T-cell (primary cell): ENCODE measurements at regions of chr11 and their contacts with region 1.

Region 1: DNA sequence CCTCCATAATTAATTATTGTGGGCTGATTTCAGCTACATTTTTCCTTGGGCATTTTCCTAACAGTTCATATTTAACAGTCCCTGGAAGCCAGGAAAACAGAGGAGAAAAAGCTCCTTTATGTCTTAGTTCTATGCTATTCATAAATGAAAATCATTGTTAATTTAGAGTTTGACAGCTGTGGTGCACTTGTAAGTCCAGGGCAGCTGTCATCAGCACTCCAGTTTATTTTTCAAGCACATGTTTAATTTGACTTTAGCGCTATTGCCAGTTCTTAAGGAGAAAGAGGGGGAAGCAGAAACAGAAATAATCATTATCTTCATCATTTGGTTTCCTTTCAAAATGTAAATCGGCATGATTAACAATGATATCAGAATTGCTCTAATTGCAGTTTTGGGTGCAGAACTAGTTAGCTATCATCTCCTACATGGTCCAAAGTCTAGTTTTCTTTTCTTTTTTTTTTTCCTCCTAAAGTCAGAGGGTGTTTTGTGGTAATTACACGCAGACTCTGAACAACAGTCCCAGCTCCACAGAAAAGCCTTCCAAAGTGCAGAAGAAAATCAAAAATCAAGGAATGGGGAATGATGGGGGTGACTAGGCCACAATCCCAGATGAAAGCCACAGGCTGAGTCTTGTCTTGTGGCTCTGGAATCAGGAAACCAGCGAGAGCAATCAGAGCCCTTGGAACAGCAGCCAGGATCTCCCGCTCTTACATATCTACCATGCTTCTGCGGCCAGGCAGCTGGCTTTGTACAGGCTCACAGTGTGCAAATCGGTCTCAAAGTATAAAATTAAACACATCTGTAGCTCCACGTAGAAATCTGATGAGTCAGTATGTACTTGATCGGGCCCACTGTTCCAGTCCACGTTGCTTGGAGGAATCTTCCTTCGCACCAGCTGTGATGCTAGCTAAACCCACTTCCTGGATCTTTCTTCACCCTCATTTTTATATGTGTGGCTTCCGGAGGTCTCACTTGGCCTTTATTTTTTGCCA is 91.9 kb downstream of the SPON1 start:
- DNase-seq: peak in 1 of 35 experiments; percentile 10
- ATAC-seq: peak in 3 of 4 experiments; percentile 34 to 76 (median 51)
- H3K4me3 ChIP-seq: no peak overlapping the region
- H3K4me3 Mint-ChIP-seq: no peak overlapping the region
- H3K27ac ChIP-seq: no peak overlapping the region
- H3K27ac Mint-ChIP-seq: peak overlapping the region in 1 of 2 donors; percentile 56
- H3K4me1 ChIP-seq: peaks cover 7 to 15% of the 10 kb centered on the region in 2 experiments
- H3K4me1 Mint-ChIP-seq: peaks cover 28 to 32% (median 29%) of the 10 kb centered on the region in 3 donors
- H3K27me3 ChIP-seq: no peaks in the 10 kb centered on the region
- H3K27me3 Mint-ChIP-seq: peaks cover 0 to 3% of the 10 kb centered on the region in 2 donors

Region 2: DNA sequence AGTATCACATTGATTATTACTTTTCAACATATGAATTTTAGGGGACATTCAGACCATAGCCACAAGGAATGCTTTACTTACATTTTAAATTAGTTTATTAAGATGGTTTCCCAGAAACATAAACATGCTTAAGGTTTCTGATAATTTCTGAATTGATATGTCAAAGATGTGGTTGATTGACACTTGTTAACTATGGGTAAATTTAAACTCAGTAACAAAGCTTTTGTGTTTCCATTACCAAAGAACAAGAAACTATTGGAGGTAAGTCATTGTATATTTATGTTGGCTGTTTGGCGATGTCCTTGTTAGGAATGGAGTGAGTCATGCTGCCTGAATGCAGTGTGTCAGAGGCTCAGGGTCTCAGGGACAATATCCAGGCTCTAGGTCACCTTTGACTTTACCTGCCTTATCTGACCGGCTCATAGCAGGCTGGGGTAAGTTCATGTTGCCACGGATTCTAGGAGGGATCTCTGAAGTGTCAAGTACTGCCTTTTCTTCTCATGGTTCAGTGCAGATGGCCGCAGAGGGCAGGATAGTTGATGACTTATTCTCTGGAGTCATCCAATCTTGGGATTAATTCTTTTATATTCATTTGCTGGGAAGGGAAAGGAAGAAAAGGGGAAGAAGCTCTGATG is 38.8 kb before region 1 on chr11:
- CTCF ChIA-PET with region 1: no interaction called
- POLR2A ChIA-PET with region 1: no interaction called
- DNase-seq: no peak
- ATAC-seq: no peak
- H3K4me3 ChIP-seq: no peak overlapping the region
- H3K4me3 Mint-ChIP-seq: no peak overlapping the region
- H3K27ac ChIP-seq: no peak overlapping the region
- H3K27ac Mint-ChIP-seq: no peak overlapping the region
- H3K4me1 ChIP-seq: no peaks in the 10 kb centered on the region
- H3K4me1 Mint-ChIP-seq: no peaks in the 10 kb centered on the region
- H3K27me3 ChIP-seq: no peaks in the 10 kb centered on the region
- H3K27me3 Mint-ChIP-seq: no peaks in the 10 kb centered on the region

Region 3: GRCh38 chr11:14041040-14041439 is 13.4 kb before region 1 on chr11:
- CTCF ChIA-PET with region 1: interaction called in 1 of 2 experiments, 13 read pairs
- POLR2A ChIA-PET with region 1: no interaction called
- DNase-seq: no peak
- ATAC-seq: no peak
- H3K4me3 ChIP-seq: no peak overlapping the region
- H3K4me3 Mint-ChIP-seq: no peak overlapping the region
- H3K27ac ChIP-seq: no peak overlapping the region
- H3K27ac Mint-ChIP-seq: no peak overlapping the region
- H3K4me1 ChIP-seq: no peaks in the 10 kb centered on the region
- H3K4me1 Mint-ChIP-seq: no peaks in the 10 kb centered on the region
- H3K27me3 ChIP-seq: peaks cover 0 to 2% of the 10 kb centered on the region in 2 experiments
- H3K27me3 Mint-ChIP-seq: no peaks in the 10 kb centered on the region

Region 4: DNA sequence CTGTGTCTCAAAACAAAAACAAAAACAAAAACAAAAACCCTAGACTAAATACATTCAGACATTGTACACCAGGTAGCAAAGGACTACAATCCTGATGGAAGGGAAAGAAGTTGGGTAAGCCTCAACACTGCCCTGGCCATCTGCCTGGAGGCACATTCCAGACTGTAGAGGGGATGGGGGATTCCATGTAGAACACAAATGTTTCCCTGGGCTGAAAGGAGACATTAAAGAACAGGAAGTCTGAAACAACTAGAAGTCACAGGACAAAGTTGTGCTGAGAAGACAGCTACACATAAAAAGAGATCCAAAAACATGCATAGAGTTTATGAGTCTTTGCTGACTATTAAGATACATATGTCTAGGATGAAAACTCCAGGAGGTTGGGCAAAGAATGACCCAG is 220.7 kb after region 1 on chr11:
- CTCF ChIA-PET with region 1: no interaction called
- POLR2A ChIA-PET with region 1: no interaction called
- DNase-seq: no peak
- ATAC-seq: no peak
- H3K4me3 ChIP-seq: no peak overlapping the region
- H3K4me3 Mint-ChIP-seq: no peak overlapping the region
- H3K27ac ChIP-seq: no peak overlapping the region
- H3K27ac Mint-ChIP-seq: no peak overlapping the region
- H3K4me1 ChIP-seq: peaks cover 11 to 16% of the 10 kb centered on the region in 2 experiments
- H3K4me1 Mint-ChIP-seq: peaks cover 23 to 34% (median 23%) of the 10 kb centered on the region in 3 donors
- H3K27me3 ChIP-seq: no peaks in the 10 kb centered on the region
- H3K27me3 Mint-ChIP-seq: no peaks in the 10 kb centered on the region